Activated CD4-positive, alpha-beta memory T cell treated with anti-CD3 and anti-CD28 coated beads for 36 hours (primary cell): ENCODE measurements at regions of chr10 and their contacts with region 1.

Region 1: DNA sequence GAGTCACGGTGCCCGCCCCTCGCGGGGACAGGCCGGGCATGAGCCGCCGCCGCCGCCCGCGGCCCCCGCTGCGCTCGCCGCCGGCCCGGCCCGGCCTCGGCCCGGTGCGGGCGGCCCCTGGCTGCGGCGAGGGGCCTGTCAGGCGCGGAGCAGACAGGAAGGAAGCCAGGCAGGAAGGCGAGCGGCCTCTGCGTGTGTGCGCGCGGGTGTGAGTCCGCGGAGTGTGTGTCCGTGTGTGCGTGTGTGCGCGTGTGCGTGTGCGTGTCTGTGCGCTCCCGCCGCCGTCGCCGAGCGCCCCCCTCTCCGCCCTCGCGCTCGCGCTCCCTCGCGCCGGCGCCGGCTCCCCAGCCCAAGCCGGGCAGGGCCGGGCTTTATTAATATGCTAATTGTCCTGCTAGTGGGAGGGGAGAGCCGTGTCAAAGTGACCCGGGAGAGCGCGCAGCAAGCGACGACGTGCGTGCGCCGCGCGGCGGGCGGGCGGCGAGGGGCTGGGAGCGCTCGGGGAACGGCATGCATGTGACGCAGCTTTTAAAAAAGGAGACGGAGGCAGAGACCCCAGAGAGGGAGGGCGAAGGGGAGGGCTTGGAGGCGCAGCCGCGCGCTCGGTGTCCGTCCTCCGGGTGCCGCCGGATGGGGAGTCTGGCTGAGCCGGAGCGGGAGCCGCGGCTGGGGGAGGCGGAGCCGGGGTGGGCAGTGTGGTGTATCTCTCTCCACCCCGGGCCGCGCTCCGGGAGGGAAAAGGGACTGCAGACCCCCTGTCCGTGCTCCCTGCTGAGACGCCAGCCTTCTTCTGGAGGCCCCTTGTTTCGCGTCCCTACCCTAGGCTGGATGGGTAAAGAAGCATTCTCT is at the start of gene LDB1:
- DNase-seq: peak; percentile 74
- H3K4me3 Mint-ChIP-seq: peak within 1 kb of the TSS; percentile 92
- H3K27ac Mint-ChIP-seq: peak within 1 kb of the TSS; percentile 96
- H3K4me1 Mint-ChIP-seq: peaks cover 49% of the 10 kb centered on the region
- H3K27me3 Mint-ChIP-seq: no peaks in the 10 kb centered on the region
- total RNA-seq, gene LDB1: 48.1 to 48.8 TPM

Region 2: DNA sequence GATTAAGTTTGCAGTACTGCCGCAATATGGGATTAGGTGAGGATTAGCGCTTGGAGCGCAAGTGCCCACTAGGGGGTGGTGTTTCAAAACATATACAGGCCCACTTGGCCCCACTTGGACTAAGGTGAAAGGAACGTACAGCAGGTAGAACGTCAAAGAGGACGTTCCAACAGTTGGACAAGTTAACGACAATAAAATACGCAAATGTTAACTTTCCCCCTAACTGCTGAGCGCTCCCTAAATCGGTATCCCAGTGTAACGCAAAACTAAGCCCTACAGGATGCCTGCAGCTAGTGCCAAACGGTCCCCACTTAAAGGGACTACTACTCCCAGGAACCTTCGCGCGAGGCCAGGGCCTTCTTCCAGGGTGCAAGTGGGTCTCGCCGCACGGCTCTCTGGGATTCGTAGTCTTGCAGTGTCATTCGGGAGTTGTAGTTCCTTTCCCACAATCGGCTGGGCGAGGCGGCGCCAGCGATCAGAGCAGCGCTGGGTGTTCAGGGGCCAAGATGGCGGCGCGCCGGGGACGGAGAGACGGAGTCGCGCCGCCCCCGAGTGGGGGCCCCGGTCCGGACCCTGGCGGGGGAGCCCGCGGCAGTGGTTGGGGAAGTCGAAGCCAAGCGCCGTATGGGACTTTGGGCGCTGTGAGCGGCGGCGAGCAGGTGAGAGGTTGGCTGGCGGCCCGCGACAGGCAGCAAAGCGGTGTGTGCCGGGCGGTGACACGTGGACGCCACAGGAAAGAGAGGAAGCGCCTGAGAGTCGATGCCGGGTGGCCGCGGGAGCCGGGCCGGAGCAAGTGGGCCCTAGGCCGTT is 12.4 kb after region 1 on chr10 and contains the start of gene PPRC1:
- CTCF ChIA-PET with region 1: interaction called, 37 read pairs
- POLR2A ChIA-PET with region 1: interaction called, 4 read pairs
- intact Hi-C with region 1: loop called (anchors 1 kb)
- DNase-seq: peak; percentile 99
- H3K4me3 Mint-ChIP-seq: peak within 1 kb of the TSS; percentile 100
- H3K27ac Mint-ChIP-seq: peak within 1 kb of the TSS; percentile 98
- H3K4me1 Mint-ChIP-seq: peaks cover 42% of the 10 kb centered on the region
- H3K27me3 Mint-ChIP-seq: no peaks in the 10 kb centered on the region
- total RNA-seq, gene PPRC1: 59.1 to 65.9 TPM